Natural killer cell (primary cell): ENCODE measurements at regions of chr1 and their contacts with region 1.

Region 1: DNA sequence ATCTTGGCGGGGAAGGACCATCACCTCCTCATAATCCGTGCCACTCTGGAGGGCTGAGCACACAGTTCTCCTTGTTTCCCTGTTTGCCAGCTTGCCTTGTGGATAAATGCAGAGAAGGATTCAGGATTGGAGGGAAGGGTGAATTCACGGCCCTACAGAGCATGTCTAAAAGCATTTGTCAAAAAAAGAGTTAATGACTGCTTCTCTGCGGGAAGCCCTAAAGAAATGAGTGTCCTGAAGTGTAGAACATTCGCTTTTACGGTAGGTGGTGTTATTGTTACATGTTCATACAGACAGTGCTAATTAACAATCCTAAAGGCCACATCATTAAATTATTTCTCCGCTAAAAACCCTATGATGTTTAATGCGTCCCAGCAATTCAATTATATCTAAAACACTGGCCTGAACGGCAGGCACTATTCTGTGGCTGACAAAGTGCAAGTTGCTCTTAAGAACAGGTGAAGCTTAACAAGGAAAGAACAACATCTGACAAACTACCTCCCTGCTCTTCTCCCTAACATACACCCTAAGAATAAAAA is 112.3 kb upstream of the NFIA start:
- DNase-seq: peak in 1 of 2 donors; percentile 9
- ATAC-seq: no peak
- H3K4me3 ChIP-seq: no peak overlapping the region
- H3K4me3 Mint-ChIP-seq: no peak overlapping the region
- H3K27ac ChIP-seq: no peak overlapping the region
- H3K27ac Mint-ChIP-seq: no peak overlapping the region
- H3K4me1 ChIP-seq: no peaks in the 10 kb centered on the region
- H3K4me1 Mint-ChIP-seq: no peaks in the 10 kb centered on the region
- H3K27me3 ChIP-seq: no peaks in the 10 kb centered on the region
- H3K27me3 Mint-ChIP-seq: peaks cover 27 to 42% of the 10 kb centered on the region in 2 donors
- CTCF ChIP-seq: no peak

Region 2: GRCh38 chr1:60937720-60938119 is 32.3 kb before region 1 on chr1:
- intact Hi-C with region 1: no loop called
- DNase-seq: no peak
- ATAC-seq: no peak
- H3K4me3 ChIP-seq: no peak overlapping the region
- H3K4me3 Mint-ChIP-seq: no peak overlapping the region
- H3K27ac ChIP-seq: no peak overlapping the region
- H3K27ac Mint-ChIP-seq: no peak overlapping the region
- H3K4me1 ChIP-seq: no peaks in the 10 kb centered on the region
- H3K4me1 Mint-ChIP-seq: no peaks in the 10 kb centered on the region
- H3K27me3 ChIP-seq: no peaks in the 10 kb centered on the region
- H3K27me3 Mint-ChIP-seq: peaks cover 9 to 39% of the 10 kb centered on the region in 2 donors
- CTCF ChIP-seq: no peak

Region 3: DNA sequence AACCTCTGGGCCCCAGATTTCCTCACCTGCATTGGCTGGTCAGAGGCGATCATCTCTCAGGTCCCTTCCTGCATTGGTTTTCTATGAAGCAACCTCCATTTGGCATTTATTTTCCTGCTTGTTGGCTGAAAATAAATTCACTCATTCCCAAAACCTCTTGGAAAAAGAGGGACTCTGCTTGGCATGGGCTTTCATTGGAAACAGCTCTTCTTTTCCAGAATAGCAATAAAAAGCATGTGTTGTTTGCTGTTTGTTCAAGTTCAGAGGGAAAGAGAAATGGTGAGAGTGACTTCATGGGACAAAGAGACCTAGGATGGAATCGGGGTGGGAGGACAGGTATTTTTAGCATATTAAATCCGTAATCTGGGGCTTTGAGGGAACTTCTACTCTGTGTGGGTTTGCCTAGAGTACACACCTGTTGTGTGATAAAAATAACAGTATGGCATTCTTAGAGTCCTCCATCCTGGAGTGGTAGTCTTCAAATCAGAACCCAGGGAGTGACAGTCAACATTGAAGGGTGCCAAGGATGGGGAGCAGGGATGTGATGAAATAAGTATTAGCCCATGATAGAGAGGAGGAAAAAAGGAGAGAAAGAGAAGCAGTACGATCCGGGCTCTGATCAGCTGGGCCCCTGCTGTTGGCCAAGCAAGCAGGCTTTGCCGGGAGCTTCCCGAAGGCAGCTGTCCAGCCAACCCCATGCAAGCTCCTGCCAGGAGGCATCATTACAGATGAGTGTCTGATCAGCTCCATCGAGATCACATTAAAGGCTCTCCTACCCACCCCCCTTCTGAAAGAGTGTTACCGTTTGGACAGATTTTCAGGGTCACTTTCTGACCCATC is 19.6 kb before region 1 on chr1:
- intact Hi-C with region 1: no loop called
- DNase-seq: no peak
- ATAC-seq: no peak
- H3K4me3 ChIP-seq: no peak overlapping the region
- H3K4me3 Mint-ChIP-seq: no peak overlapping the region
- H3K27ac ChIP-seq: no peak overlapping the region
- H3K27ac Mint-ChIP-seq: no peak overlapping the region
- H3K4me1 ChIP-seq: peaks cover 7% of the 10 kb centered on the region
- H3K4me1 Mint-ChIP-seq: peaks cover 10% of the 10 kb centered on the region in 2 donors
- H3K27me3 ChIP-seq: no peaks in the 10 kb centered on the region
- H3K27me3 Mint-ChIP-seq: peaks cover 22 to 51% of the 10 kb centered on the region in 2 donors
- CTCF ChIP-seq: no peak

Region 4: DNA sequence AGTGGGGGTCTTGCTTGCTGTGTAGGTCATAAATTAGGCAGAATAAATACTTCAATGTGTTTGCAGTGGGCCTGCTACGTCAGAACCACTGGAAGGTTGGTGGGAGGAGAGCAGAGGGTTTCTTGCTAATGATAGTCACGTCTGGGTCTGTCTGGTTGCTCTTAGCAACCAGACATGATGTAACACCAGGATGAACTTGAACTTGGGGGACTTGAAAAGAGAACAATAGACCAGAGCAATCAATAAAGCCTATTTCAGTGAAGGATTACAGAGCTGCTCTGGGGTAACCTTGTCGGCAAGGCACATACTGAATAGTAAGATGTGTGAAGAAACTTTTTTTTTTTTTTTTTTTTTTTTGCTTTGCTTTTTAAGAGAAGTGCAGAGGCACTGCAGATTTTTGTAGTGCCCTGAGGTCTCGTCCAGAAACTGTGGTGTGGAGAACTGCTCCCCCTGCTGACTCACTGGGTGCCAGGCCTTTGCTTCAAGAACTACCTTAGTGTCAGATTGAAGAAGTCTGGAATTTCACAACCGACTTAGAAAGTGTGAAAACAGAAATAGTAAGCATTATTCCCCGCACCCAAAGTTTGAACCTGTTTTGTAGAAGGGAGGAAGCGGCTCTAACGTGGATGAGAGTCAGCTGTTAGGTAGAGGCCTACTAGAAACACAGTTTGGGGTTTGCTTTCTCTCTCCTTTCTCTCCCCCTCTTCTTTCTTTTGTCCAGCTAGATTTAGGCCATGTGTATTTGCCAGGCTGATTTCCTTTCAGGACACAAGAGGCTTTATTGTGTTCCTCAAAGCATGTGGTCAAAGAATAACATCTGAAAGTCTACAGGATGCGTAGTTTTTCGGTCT is 483.3 kb after region 1 on chr1:
- intact Hi-C with region 1: loop called (anchors 2 kb)
- DNase-seq: peak; percentile 53 to 82
- ATAC-seq: peak; percentile 81 to 84 (median 82)
- H3K4me3 ChIP-seq: no peak overlapping the region
- H3K4me3 Mint-ChIP-seq: no peak overlapping the region
- H3K27ac ChIP-seq: no peak overlapping the region
- H3K27ac Mint-ChIP-seq: peak overlapping the region; percentile 45 to 62
- H3K4me1 ChIP-seq: peaks cover 7% of the 10 kb centered on the region
- H3K4me1 Mint-ChIP-seq: peaks cover 27 to 34% of the 10 kb centered on the region in 2 donors
- H3K27me3 ChIP-seq: no peaks in the 10 kb centered on the region
- H3K27me3 Mint-ChIP-seq: peaks cover 0 to 24% of the 10 kb centered on the region in 2 donors
- CTCF ChIP-seq: peak; percentile 66